ENCODE measurements at regions of chr22 and their contacts with region 1.

Region 1: DNA sequence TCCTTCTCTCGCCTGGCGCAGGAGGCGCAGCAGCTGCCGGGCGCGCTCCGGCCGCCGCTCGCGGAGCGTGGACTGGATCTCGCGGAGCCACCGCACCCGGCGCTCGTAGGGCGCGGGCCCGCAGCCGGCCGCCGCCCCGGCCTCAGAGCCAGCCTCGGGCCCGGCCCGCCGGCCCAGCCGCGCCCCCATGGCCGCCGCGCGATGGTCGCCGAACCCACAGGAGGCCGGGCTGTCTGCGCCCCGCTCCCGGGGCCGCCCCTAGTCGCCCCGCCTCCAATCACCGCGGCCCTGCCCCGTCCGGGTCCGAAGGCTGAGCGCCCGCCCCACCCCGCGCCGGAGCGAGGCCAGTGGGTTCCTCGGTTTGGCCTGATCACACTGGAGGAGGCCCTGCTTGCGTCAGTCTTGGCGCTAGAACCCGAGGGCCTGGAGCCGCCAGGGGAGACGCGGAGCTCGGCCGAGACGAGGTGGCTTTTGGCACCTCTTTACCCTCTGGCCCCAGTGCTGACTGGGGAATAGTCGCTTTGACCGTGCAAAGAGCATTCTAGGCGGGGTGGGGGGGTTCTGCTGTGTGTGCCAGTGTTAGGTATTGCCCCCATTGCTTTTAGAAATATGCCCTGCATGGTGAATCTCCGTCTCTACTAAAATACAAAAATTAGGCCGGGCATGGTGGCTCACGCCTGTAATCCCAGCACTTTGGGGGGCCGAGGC is at the start of gene LRRC75B:
- DNase-seq: peak; percentile 46 to 91
- H3K4me3 ChIP-seq: peak within 1 kb of the TSS; percentile 41 to 87 (median 60)
- H3K27ac ChIP-seq: no peak within 1 kb of the TSS; the same call in 1 of the 2 replicates
- H3K4me1 ChIP-seq: peaks cover 0 to 25% (median 10%) of the 10 kb centered on the region in 4 experiments; a peak in 6 of 7 replicates
- H3K27me3 ChIP-seq: no peaks in the 10 kb centered on the region
- CTCF ChIP-seq: no peak
- EP300 ChIP-seq: no peak
- POLR2A ChIP-seq: peak in 1 of 2 experiments; percentile 65; a peak in 2 of 3 replicates
- RAD21 ChIP-seq: no peak
- total RNA-seq, gene LRRC75B: 10.9 and 12.2 TPM in 2 replicates

Region 2: DNA sequence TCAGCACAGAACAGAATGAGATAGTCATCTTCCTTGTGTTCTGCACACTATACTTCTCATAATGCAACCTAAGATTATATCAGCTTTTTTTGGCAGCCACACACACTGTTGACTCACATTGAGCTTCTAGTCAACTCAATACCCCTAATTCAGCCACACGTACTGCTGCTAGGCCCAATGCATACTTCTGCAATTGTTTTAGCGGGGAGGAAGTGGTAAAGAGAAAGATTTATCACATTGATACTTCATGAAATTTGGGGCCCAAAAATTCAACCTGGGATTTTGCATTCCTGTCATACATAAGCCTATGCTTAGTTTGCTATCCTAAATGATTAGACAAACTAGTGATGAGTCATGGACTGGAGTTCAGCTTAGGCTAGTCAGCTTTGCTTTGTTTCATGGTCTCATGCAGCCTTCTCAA is 106.5 kb before region 1 on chr22:
- CTCF ChIA-PET with region 1: no interaction called
- POLR2A ChIA-PET with region 1: no interaction called
- DNase-seq: no peak
- H3K4me3 ChIP-seq: no peak overlapping the region
- H3K27ac ChIP-seq: no peak overlapping the region
- H3K4me1 ChIP-seq: no peaks in the 10 kb centered on the region; a peak in 2 of 7 replicates
- H3K27me3 ChIP-seq: no peaks in the 10 kb centered on the region
- CTCF ChIP-seq: no peak
- EP300 ChIP-seq: no peak
- POLR2A ChIP-seq: no peak
- RAD21 ChIP-seq: no peak

Region 3: DNA sequence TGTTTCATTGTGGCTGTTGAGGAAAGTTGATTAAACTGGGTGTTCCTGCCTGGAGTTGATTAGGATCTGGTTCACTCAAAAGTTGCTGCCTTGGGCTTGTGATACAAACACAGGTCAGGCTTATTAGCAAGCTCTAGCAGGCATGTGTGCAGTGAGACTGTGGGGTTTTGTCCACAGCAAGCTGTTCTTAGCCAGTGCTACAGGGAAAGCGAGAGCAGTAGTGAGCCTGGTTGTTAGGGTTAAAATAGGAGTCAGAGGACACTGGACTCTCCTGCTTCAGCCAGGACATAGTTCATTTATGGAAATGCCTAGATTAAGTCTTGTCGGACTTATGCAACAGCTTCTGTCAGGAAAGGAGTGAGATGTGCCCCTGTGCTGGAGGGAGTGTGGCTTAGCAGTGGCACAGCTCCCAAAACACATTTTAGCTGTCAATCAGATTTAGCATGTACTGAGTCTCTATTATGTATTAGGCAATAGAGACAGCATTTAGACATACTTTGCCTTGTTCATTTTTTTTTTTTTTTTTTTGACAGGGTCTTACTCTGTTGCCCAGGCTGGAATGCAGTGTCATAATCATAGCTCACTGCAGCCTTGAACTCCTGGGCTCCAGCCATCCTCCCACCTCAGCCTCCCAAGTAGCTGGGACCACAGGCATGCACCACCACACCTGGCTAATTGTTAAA is 28.5 kb before region 1 on chr22:
- CTCF ChIA-PET with region 1: no interaction called
- POLR2A ChIA-PET with region 1: interaction called, 32 read pairs
- DNase-seq: no peak
- H3K4me3 ChIP-seq: no peak overlapping the region
- H3K27ac ChIP-seq: no peak overlapping the region
- H3K4me1 ChIP-seq: no peaks in the 10 kb centered on the region
- H3K27me3 ChIP-seq: no peaks in the 10 kb centered on the region
- CTCF ChIP-seq: no peak
- EP300 ChIP-seq: no peak
- POLR2A ChIP-seq: no peak
- RAD21 ChIP-seq: no peak